Activated T-helper 2 cell treated with anti-CD3 and anti-CD28 coated beads, Interferon-gamma antibody, Interleukin-2, Interleukin-4, amounts not matched to agents 10 μg/mL and 5 μg/mL and 100 μg/mL, durations not matched to agents 14 hours and 24 hours and 36 hours (primary cell): ENCODE measurements at regions of chr4 and their contacts with region 1.

Region 1: DNA sequence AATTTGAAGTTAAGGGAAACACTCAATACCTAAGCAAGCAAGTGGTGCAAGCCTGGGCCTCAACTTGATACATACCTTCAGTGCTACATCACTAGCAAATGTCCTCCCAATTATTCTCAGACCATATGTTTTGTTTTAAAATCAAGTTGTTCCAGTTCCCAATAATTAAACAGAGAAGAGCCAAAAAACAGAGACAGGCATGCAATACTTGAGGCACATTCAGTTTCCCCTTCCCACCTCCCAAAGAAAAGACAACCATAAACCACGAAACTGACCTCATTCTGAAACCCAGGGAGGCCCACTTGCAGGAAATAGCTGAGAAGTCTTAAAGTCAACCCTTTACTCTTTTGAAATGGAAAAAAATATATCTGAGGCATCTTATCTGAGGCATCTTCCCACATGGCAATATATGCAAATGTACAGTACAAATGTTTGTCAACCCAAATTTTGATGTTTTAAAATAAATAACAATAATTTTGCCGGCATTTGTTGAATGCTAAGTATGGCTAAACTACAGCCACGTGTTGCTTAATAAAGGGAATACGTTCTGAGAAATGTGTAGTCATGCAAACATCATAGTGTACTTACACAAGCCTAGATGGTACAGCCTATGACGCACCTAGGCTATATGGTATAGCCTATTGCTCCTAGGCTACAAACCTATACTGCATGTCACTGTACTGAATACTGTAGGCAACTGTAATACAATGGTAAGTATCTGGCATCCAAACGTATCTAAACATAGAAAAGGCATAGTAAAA is 147.5 kb downstream of the TSPAN5 start:
- DNase-seq: peak; percentile 28
- H3K4me3 Mint-ChIP-seq: peak overlapping the region; percentile 50
- H3K27ac Mint-ChIP-seq: peak overlapping the region; percentile 70
- H3K4me1 Mint-ChIP-seq: peaks cover 80% of the 10 kb centered on the region
- H3K27me3 Mint-ChIP-seq: no peaks in the 10 kb centered on the region

Region 2: GRCh38 chr4:98055800-98056501 is 455.0 kb before region 1 on chr4:
- intact Hi-C with region 1: no loop called
- DNase-seq: no peak
- H3K4me3 Mint-ChIP-seq: no peak overlapping the region
- H3K27ac Mint-ChIP-seq: no peak overlapping the region
- H3K4me1 Mint-ChIP-seq: no peaks in the 10 kb centered on the region
- H3K27me3 Mint-ChIP-seq: no peaks in the 10 kb centered on the region

Region 3: GRCh38 chr4:98482847-98483806 is 27.8 kb before region 1 on chr4:
- intact Hi-C with region 1: loop called (anchors 1 kb)
- DNase-seq: no peak
- H3K4me3 Mint-ChIP-seq: peak overlapping the region; percentile 70
- H3K27ac Mint-ChIP-seq: peak overlapping the region; percentile 99
- H3K4me1 Mint-ChIP-seq: peaks cover 88% of the 10 kb centered on the region
- H3K27me3 Mint-ChIP-seq: no peaks in the 10 kb centered on the region

Region 4: DNA sequence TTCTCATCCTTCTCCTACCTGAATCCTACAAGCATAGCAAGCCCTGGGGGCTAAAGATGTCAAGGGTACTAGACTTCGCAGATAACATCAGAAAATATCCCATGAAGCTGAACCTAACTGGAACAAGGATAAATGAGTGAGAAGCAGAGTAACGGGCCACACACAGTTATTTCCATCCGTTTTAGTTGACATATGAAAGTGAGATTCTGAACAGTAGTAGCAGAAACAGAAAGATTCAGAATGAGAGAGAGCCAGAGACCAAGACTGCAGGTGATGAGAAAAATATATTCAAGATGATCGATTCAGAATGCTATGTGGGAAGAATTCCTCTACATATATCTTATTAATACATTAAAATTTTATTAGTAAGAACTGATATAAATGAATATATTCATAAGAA is 17.6 kb before region 1 on chr4:
- intact Hi-C with region 1: loop called (anchors 1 kb)
- DNase-seq: no peak
- H3K4me3 Mint-ChIP-seq: no peak overlapping the region
- H3K27ac Mint-ChIP-seq: peak overlapping the region; percentile 14
- H3K4me1 Mint-ChIP-seq: peaks cover 36% of the 10 kb centered on the region
- H3K27me3 Mint-ChIP-seq: no peaks in the 10 kb centered on the region

Region 5: GRCh38 chr4:98528882-98529281 is 17.9 kb after region 1 on chr4:
- intact Hi-C with region 1: loop called (anchors 1 kb)
- DNase-seq: no peak
- H3K4me3 Mint-ChIP-seq: no peak overlapping the region
- H3K27ac Mint-ChIP-seq: peak overlapping the region; percentile 10
- H3K4me1 Mint-ChIP-seq: peaks cover 36% of the 10 kb centered on the region
- H3K27me3 Mint-ChIP-seq: no peaks in the 10 kb centered on the region